Kidney (tissue), 22 donors: ENCODE measurements at regions of chr11 and their contacts with region 1.

Region 1: DNA sequence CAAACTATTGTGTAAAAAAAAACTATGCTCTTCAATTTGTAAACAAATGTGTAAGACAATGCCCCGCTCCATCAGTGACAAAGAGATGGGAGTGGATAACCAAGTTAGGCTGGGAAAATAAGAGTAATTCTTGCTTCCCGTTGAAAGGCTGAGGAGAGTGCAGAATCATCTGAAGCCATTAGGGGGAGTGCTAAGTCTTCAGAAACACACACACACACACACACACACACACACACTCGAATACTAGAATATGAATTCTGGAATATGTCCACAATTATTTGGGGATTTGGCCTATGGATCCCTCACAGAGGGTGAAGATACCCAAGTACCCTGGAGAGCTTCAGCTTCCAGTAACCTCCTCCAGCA is 27.8 kb upstream of the ROBO3 start:
- DNase-seq: peak in 3 of 5 donors; percentile 35 to 85 (median 84)
- H3K4me3 ChIP-seq: no peak overlapping the region
- H3K27ac ChIP-seq: no peak overlapping the region
- H3K4me1 ChIP-seq: peaks cover 0 to 10% (median 4%) of the 10 kb centered on the region in 3 donors
- H3K27me3 ChIP-seq: peaks cover 29% of the 10 kb centered on the region
- CTCF ChIP-seq: peak; percentile 41

Region 2: DNA sequence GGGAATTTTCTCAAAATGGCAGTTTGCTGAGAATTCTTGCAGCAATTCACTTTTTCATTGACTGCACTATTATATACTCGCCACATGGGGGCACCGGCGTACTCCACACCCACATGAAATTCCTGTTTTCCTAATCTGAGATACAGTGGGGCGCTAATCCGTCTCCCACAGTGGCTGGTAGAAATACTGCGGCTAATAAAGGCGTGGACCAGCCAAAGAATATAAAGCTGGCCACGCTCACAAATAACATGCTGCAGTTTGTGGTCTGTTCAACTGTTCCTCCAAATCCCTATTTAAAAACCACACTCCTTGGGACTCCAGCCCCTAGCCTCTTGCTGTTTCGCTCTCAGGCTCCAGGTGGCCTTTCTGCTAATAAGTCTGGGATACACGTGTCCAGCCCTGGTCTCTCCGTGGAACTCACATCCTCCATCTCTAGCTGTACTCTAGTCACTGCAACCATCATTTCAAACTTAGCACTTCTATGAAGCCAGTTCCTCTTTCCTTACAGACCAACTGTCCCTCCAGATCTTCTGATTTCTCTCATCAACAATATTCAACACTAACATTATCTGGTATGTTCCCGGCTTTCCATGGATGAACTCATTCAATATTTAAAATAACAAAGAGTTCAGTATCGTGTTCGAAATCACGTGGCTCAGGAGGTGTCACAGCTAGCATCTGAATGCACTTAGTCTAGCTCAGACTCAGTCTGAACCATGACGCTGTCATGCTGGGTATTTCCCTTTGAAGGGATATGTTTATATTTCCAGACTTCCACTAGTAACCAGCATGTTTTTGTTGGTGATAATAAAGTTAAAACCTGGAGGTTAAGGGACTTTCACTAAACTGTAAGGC is 192.8 kb before region 1 on chr11:
- intact Hi-C with region 1: loop called (anchors 10 kb)
- DNase-seq: peak in 4 of 5 donors; percentile 63 to 81 (median 76)
- H3K4me3 ChIP-seq: peak overlapping the region in 2 of 3 donors; percentile 43 to 45
- H3K27ac ChIP-seq: no peak overlapping the region
- H3K4me1 ChIP-seq: no peaks in the 10 kb centered on the region
- H3K27me3 ChIP-seq: no peaks in the 10 kb centered on the region
- CTCF ChIP-seq: peak; percentile 86